ENCODE measurements at regions of chr1 and their contacts with region 1.

Region 1: DNA sequence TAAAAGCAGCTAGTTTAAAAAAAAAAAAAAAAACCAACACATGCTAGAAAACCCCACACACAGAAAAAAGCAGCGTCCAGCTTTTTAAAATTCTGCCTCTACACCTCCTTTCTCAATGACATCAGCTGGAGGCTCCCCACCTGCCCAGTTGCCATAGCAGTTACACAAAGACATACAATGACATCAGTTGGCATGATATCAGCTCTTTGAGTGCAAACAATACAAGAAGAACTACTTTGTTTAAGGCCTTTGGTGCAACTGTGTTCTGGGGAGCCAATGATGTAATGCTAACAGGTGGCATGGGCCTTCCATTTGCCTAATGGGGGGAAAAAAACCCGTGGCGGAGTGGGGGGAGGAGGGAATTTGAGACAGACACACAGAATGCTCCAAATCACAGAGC is 32.9 kb downstream of the DUSP10 start:
- DNase-seq: peak in 7 of 9 experiments; percentile 31 to 91 (median 57)
- ATAC-seq: peak; percentile 41
- H3K4me3 ChIP-seq: no peak overlapping the region
- H3K4me3 Mint-ChIP-seq: no peak overlapping the region
- H3K27ac ChIP-seq: peak overlapping the region in 1 of 2 experiments; percentile 65
- H3K27ac Mint-ChIP-seq: peak overlapping the region; percentile 82
- H3K4me1 ChIP-seq: peaks cover 31% of the 10 kb centered on the region
- H3K4me1 Mint-ChIP-seq: peaks cover 56% of the 10 kb centered on the region
- H3K27me3 ChIP-seq: no peaks in the 10 kb centered on the region
- H3K27me3 Mint-ChIP-seq: no peaks in the 10 kb centered on the region
- CTCF ChIP-seq: no peak

Region 2: GRCh38 chr1:221419513-221420088 is 289.4 kb before region 1 on chr1:
- CTCF ChIA-PET with region 1: no interaction called
- POLR2A ChIA-PET with region 1: no interaction called
- intact Hi-C with region 1: no loop called
- DNase-seq: no peak
- ATAC-seq: no peak
- H3K4me3 ChIP-seq: no peak overlapping the region
- H3K4me3 Mint-ChIP-seq: no peak overlapping the region
- H3K27ac ChIP-seq: no peak overlapping the region
- H3K27ac Mint-ChIP-seq: no peak overlapping the region
- H3K4me1 ChIP-seq: no peaks in the 10 kb centered on the region
- H3K4me1 Mint-ChIP-seq: no peaks in the 10 kb centered on the region
- H3K27me3 ChIP-seq: no peaks in the 10 kb centered on the region
- H3K27me3 Mint-ChIP-seq: peaks cover 7% of the 10 kb centered on the region
- CTCF ChIP-seq: no peak

Region 3: DNA sequence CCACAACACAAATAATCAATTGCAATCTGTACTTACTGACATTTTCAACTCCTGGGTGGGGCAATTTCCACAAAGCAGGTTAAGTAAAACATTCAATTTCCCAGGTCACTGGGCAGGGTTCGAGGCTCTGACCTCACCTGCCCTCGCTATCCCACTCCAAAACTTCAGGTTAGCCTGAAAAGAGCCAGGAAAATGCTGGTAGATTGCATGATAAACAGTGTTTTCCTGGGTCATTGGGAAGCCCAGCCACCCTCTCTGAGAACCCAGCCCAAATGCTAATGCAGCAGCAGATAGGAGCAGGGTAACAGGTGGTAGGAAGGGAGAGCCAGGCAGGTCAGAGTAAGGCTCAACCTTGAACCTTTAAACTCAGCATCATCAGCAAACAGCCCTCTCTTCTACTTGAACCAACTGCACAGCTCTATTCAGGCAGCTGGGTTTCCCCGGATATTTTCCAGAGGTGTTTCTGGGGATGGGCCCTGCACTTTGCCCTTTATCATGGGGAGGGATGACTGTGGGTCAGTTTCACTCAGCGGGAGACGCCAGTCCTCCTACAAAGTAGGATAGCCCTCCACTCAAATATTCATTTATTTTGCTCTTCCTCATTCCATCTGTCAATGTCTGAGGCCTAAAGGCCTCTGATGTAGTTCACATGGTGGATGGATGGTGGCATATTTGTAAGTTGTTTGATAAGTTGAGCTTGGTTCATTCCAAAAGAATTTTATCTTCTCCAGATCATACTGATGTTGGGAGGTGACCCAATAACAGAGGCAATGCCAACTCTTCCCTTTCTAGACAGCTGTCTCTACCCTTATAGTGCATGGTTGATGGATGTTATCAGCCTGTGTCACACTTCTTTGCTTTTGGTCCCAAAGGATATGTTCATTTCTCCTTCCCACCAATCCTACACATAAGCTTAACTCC is 32.8 kb before region 1 on chr1:
- CTCF ChIA-PET with region 1: no interaction called
- POLR2A ChIA-PET with region 1: no interaction called
- intact Hi-C with region 1: loop called in 1 of 2 experiments (anchors 5 kb)
- DNase-seq: no peak
- ATAC-seq: no peak
- H3K4me3 ChIP-seq: no peak overlapping the region
- H3K4me3 Mint-ChIP-seq: no peak overlapping the region
- H3K27ac ChIP-seq: no peak overlapping the region
- H3K27ac Mint-ChIP-seq: no peak overlapping the region
- H3K4me1 ChIP-seq: no peaks in the 10 kb centered on the region
- H3K4me1 Mint-ChIP-seq: peaks cover 4% of the 10 kb centered on the region
- H3K27me3 ChIP-seq: no peaks in the 10 kb centered on the region
- H3K27me3 Mint-ChIP-seq: no peaks in the 10 kb centered on the region
- CTCF ChIP-seq: no peak

Region 4: GRCh38 chr1:221695346-221695745 is 13.6 kb before region 1 on chr1:
- CTCF ChIA-PET with region 1: interaction called, 4 read pairs
- POLR2A ChIA-PET with region 1: interaction called, 4 read pairs
- intact Hi-C with region 1: loop called in 1 of 2 experiments (anchors 2 kb)
- DNase-seq: no peak
- ATAC-seq: no peak
- H3K4me3 ChIP-seq: no peak overlapping the region
- H3K4me3 Mint-ChIP-seq: no peak overlapping the region
- H3K27ac ChIP-seq: no peak overlapping the region
- H3K27ac Mint-ChIP-seq: no peak overlapping the region
- H3K4me1 ChIP-seq: no peaks in the 10 kb centered on the region
- H3K4me1 Mint-ChIP-seq: peaks cover 11% of the 10 kb centered on the region
- H3K27me3 ChIP-seq: no peaks in the 10 kb centered on the region
- H3K27me3 Mint-ChIP-seq: no peaks in the 10 kb centered on the region
- CTCF ChIP-seq: no peak

Region 5: GRCh38 chr1:221725735-221726672 is 17.0 kb after region 1 on chr1:
- CTCF ChIA-PET with region 1: no interaction called
- POLR2A ChIA-PET with region 1: interaction called, 7 read pairs
- intact Hi-C with region 1: loop called (anchors 2 kb)
- DNase-seq: peak in 1 of 9 experiments; percentile 50
- ATAC-seq: peak; percentile 75
- H3K4me3 ChIP-seq: no peak overlapping the region
- H3K4me3 Mint-ChIP-seq: peak overlapping the region; percentile 20
- H3K27ac ChIP-seq: peak overlapping the region in 1 of 2 experiments; percentile 53
- H3K27ac Mint-ChIP-seq: peak overlapping the region; percentile 68
- H3K4me1 ChIP-seq: peaks cover 33% of the 10 kb centered on the region
- H3K4me1 Mint-ChIP-seq: peaks cover 48% of the 10 kb centered on the region
- H3K27me3 ChIP-seq: no peaks in the 10 kb centered on the region
- H3K27me3 Mint-ChIP-seq: no peaks in the 10 kb centered on the region
- CTCF ChIP-seq: no peak

Region 6: DNA sequence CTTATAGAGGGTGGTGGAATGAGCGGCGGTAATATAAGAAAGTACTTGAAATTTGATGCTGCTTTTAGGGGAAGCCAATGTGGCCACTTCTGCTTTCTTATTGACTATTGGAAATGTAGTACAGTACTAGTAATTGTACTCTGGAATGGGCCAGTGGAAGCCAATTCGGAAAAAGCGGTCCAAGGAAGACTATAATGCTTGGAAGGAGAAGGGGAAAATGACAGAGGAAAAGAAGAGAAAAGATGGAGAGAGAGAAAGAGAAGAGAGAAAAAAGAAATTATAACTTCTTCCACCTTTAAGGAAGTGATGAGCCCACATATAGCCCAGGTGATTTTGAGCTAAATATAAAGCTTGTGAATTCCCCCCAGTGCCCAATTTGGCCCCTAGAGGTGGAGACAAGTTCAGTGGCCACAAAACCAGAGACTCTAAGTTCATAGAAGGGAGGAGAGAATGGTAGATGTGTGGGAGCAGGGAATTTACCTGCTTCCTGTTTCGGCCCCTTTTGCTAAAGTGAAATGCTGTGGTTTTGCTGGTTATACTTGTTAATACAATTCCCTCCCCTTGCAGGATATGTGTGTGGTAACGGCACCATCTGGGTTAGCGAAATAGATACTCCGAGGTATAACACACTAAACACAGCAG is 68.6 kb after region 1 on chr1:
- CTCF ChIA-PET with region 1: no interaction called
- POLR2A ChIA-PET with region 1: interaction called, 6 read pairs
- intact Hi-C with region 1: loop called in 1 of 2 experiments (anchors 5 kb)
- DNase-seq: peak in 7 of 9 experiments; percentile 21 to 93 (median 50)
- ATAC-seq: peak; percentile 72
- H3K4me3 ChIP-seq: peak overlapping the region in 1 of 2 experiments; percentile 5
- H3K4me3 Mint-ChIP-seq: peak overlapping the region; percentile 52
- H3K27ac ChIP-seq: peak overlapping the region; percentile 32 to 75
- H3K27ac Mint-ChIP-seq: peak overlapping the region; percentile 81
- H3K4me1 ChIP-seq: peaks cover 43% of the 10 kb centered on the region
- H3K4me1 Mint-ChIP-seq: peaks cover 51% of the 10 kb centered on the region
- H3K27me3 ChIP-seq: no peaks in the 10 kb centered on the region
- H3K27me3 Mint-ChIP-seq: no peaks in the 10 kb centered on the region
- CTCF ChIP-seq: no peak

Region 7: DNA sequence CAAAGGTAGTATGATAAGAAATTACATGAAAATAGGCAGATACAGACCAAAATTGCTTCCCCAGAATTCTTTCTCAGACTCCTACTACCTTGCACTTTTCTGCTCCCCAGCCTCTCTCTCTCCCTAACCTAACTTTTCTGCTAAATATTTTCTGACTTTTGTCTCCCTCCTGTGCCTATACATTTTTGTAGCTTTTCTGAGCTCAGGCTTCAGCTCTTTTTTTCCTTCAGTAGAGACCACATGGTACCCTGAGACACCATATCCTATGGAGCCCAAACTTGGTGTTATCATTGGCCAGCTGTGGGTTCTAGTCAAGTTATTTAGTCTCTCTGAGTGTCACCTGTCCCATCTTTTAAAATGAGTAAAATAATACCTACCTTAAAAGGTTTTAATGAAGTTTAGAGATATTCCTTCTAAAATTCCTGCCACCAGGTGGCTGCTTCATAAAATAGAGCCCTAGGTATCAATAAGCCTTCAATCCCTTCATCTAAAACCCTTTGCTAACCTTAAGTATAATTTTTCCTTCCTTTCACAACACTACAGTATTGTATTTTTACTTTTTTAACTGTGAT is 270.6 kb after region 1 on chr1:
- CTCF ChIA-PET with region 1: no interaction called
- POLR2A ChIA-PET with region 1: no interaction called
- intact Hi-C with region 1: no loop called
- DNase-seq: peak in 2 of 9 experiments; percentile 2 to 7
- ATAC-seq: no peak
- H3K4me3 ChIP-seq: no peak overlapping the region
- H3K4me3 Mint-ChIP-seq: no peak overlapping the region
- H3K27ac ChIP-seq: no peak overlapping the region
- H3K27ac Mint-ChIP-seq: no peak overlapping the region
- H3K4me1 ChIP-seq: no peaks in the 10 kb centered on the region
- H3K4me1 Mint-ChIP-seq: no peaks in the 10 kb centered on the region
- H3K27me3 ChIP-seq: no peaks in the 10 kb centered on the region
- H3K27me3 Mint-ChIP-seq: peaks cover 7% of the 10 kb centered on the region
- CTCF ChIP-seq: no peak

Region 8: DNA sequence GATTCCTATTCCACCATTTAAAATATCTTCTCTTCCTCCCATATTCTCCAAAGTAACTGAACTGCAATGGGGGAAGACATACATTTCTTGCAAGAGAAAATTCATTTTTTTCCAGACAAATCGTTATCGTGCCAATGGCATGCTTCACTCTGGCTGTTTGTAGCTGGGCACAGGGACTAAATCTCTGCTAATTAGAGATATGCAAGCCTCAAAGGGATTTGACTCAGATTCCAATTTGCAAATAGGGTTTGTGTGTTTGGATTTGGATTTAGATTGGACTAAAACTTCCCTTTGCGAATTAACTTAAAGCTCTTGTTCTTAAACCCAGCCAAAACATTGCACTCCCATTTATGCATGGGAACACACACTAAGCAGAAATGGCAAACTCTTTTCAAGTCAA is 309.1 kb after region 1 on chr1:
- CTCF ChIA-PET with region 1: no interaction called
- POLR2A ChIA-PET with region 1: no interaction called
- intact Hi-C with region 1: no loop called
- DNase-seq: no peak
- ATAC-seq: no peak
- H3K4me3 ChIP-seq: no peak overlapping the region
- H3K4me3 Mint-ChIP-seq: no peak overlapping the region
- H3K27ac ChIP-seq: no peak overlapping the region
- H3K27ac Mint-ChIP-seq: no peak overlapping the region
- H3K4me1 ChIP-seq: no peaks in the 10 kb centered on the region
- H3K4me1 Mint-ChIP-seq: no peaks in the 10 kb centered on the region
- H3K27me3 ChIP-seq: no peaks in the 10 kb centered on the region
- H3K27me3 Mint-ChIP-seq: peaks cover 2% of the 10 kb centered on the region
- CTCF ChIP-seq: no peak

Measured in CD8-positive, alpha-beta T cell (primary cell).